IMR-90 (cell line): ENCODE measurements at regions of chr2 and their contacts with region 1.

Region 1: DNA sequence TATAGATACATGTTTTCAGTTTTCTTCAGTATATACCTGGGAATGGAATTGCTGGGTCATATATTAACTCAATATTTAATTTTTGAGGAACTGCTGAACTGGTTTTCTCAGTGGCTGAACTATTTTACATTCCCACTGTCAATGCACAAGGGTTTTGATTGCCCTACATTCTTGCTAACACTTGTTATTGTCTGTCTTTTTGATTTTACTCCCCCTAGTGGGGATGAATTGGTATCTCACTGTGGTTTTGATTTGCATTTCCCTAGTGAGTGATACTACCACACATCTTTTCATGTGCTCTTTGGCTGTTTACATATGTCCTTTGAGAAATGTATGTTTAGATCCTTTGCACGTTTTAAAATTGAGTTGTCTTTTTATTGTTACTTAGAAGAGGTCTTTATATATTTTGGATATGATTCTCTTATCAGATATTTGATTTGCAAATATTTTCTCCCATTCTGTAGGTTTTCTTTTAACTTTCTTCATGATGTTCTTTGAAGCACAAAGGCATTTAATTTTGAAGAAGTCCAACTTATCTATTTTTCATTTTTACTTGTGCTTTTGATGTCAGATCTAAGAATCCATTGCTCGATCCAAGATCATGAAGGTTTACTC is 36.2 kb downstream of the ASB1 start:
- DNase-seq: peak; percentile 58
- ATAC-seq: peak; percentile 59; the same call in 1 of the 2 replicates
- H3K4me3 ChIP-seq: no peak overlapping the region
- H3K27ac ChIP-seq: no peak overlapping the region
- H3K4me1 ChIP-seq: peaks cover 7% of the 10 kb centered on the region
- H3K27me3 ChIP-seq: no peaks in the 10 kb centered on the region
- CTCF ChIP-seq: peak; percentile 76
- POLR2A ChIP-seq: no peak
- RAD21 ChIP-seq: peak; percentile 72

Region 2: DNA sequence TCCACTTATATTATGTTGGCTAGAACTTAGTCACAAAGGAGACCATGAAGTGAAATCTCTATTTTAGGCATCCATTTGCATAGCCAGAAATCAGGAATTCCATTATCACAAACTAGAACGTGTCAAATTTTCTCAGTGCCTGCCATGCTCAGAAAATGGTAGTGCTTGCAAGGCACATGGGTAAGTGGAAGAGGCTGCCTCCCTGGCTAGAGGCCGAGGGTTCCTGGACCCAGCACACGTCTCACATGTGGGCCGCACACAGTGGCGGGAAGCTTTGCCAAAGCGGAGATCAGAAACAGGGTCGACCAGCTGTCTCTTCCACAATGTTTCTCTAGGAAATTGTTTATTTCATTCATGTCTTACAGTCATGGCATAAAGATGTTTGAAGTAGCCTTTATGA is 100.3 kb before region 1 on chr2:
- CTCF ChIA-PET with region 1: interaction called, 3 read pairs
- POLR2A ChIA-PET with region 1: no interaction called
- dilution Hi-C with region 1: no loop called
- in situ Hi-C with region 1: loop called (anchors 10 kb)
- intact Hi-C with region 1: loop called (anchors 1 kb)
- DNase-seq: no peak
- ATAC-seq: no peak
- H3K4me3 ChIP-seq: no peak overlapping the region
- H3K27ac ChIP-seq: no peak overlapping the region
- H3K4me1 ChIP-seq: no peaks in the 10 kb centered on the region
- H3K27me3 ChIP-seq: no peaks in the 10 kb centered on the region
- CTCF ChIP-seq: no peak
- POLR2A ChIP-seq: no peak
- RAD21 ChIP-seq: no peak

Region 3: DNA sequence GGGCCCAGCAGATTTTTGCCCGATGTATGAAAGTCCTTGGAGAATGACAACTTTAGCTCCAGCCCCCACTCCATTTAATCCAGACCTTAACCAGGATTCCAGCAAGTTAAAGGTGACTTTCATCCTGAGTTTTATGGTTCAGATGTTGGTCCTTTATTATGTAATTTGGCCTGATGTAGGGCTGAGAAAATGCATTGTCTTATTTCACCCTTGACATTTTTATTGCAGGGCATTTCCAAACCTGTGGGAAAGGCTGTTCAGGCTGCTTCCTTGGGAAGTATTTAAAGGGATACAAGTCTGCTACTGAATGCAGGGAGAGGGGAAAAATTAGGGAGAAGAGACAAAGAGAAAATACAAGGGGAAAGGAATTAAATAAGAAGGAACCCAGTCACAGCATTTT is 12.7 kb after region 1 on chr2:
- CTCF ChIA-PET with region 1: no interaction called
- POLR2A ChIA-PET with region 1: interaction called, 11 read pairs
- dilution Hi-C with region 1: no loop called
- in situ Hi-C with region 1: no loop called
- intact Hi-C with region 1: no loop called
- DNase-seq: no peak
- ATAC-seq: no peak
- H3K4me3 ChIP-seq: no peak overlapping the region
- H3K27ac ChIP-seq: no peak overlapping the region
- H3K4me1 ChIP-seq: no peaks in the 10 kb centered on the region
- H3K27me3 ChIP-seq: no peaks in the 10 kb centered on the region
- CTCF ChIP-seq: no peak
- POLR2A ChIP-seq: no peak
- RAD21 ChIP-seq: no peak